HCT116 (cell line): ENCODE measurements at regions of chrX and their contacts with region 1.

Region 1: DNA sequence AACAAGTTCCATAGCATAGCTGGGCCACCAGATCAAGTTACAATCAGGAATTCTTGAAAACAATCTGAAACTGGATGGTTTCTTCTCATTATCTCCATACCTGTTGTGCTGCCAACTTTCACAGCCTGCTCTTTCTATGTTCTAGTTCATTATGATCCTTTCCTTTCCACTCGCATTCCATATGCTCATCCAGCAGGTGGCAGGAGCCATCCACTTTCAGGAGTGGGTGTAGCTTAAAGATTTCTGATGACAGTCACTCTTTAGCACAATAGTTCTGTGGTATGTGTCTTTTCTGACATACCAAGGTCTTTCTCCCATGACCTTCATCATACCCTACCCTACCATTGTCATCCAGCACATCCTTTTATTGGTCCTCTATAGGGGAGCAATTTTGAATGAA is 46.4 kb downstream of the PAGE2 start:
- DNase-seq: peak; percentile 2
- ATAC-seq: peak; percentile 57
- H3K4me3 ChIP-seq: no peak overlapping the region
- H3K27ac ChIP-seq: no peak overlapping the region
- H3K4me1 ChIP-seq: no peaks in the 10 kb centered on the region
- H3K27me3 ChIP-seq: no peaks in the 10 kb centered on the region
- CTCF ChIP-seq: peak; percentile 38 to 45 (median 40); a peak in 5 of 6 replicates
- POLR2A ChIP-seq: no peak
- RAD21 ChIP-seq: peak; percentile 65

Region 2: DNA sequence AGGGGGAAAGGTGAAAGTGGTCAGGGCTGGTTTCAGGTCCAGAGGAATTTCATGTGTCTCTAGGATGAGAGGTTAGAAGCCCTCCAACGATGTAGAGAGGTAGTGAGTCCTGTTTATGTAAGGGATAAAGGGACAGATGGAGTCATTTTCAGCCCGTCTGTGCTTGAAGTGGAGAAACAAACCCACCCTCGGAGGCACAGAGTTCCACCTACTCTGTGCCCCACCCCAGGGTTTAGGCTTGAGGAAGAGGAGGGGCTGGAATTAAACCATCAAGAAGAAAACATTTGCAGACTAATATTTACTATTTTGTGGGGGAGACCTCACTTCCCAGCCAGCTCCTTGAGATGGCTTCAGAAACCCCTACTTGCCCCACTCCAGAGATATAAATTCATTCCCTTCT is 606.0 kb before region 1 on chrX:
- CTCF ChIA-PET with region 1: no interaction called
- POLR2A ChIA-PET with region 1: no interaction called
- RAD21 ChIA-PET with region 1: no interaction called
- intact Hi-C with region 1: no loop called
- DNase-seq: no peak
- ATAC-seq: no peak
- H3K4me3 ChIP-seq: peak overlapping the region; percentile 62 to 87
- H3K27ac ChIP-seq: peak overlapping the region; percentile 79
- H3K4me1 ChIP-seq: peaks cover 5 to 25% of the 10 kb centered on the region in 2 experiments
- H3K27me3 ChIP-seq: no peaks in the 10 kb centered on the region
- CTCF ChIP-seq: no peak
- POLR2A ChIP-seq: no peak
- RAD21 ChIP-seq: no peak

Region 3: GRCh38 chrX:55088795-55089489 is 46.2 kb before region 1 on chrX and contains the start of gene PAGE2:
- CTCF ChIA-PET with region 1: no interaction called
- POLR2A ChIA-PET with region 1: no interaction called
- RAD21 ChIA-PET with region 1: no interaction called
- intact Hi-C with region 1: no loop called
- DNase-seq: no peak
- ATAC-seq: no peak
- H3K4me3 ChIP-seq: no peak within 1 kb of the TSS
- H3K27ac ChIP-seq: no peak within 1 kb of the TSS
- H3K4me1 ChIP-seq: no peaks in the 10 kb centered on the region
- H3K27me3 ChIP-seq: no peaks in the 10 kb centered on the region
- CTCF ChIP-seq: no peak
- POLR2A ChIP-seq: no peak
- RAD21 ChIP-seq: no peak
- total RNA-seq, gene PAGE2: not detected

Region 4: DNA sequence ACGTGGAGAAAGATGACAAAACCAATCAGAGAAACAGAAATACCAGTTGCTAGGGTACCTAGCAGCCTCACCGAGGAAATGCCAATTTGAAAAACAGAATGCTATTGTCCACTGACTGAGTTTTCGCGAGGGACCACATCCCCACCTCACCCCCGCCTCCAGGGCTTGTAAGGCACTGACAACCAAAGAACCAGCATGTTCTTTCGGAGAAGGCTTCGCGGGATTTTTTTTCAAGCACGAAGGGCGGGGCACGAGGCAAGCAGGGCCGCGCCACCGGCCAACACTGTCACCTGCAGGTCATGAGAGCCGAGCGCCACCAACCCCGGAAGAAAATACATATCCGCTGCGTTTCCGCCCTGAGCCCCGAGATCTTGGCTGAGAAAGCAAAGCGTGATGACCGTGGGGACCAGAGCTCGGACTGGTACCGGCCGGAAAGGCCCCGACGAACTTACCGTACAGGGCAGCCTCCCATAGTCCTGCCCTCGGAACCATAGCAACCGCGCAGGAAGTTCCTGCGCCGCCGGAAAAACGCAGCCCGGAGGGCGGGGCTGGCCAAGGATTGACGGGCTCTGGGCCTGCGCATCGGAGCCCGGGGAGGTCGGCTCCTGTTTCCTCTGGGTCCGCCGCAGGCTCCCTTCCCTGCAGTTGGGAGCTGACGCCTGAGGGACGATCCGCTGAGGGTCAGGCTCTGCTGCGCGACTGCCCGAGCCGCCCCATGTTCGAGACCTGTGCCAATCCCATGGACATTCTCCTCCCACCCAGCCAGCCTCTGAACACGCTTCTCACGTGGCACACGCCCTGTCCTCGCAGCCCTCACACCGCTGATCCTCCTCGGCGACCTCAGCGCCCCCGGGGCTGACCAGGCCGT is 25.7 kb after region 1 on chrX:
- CTCF ChIA-PET with region 1: no interaction called
- POLR2A ChIA-PET with region 1: no interaction called
- RAD21 ChIA-PET with region 1: no interaction called
- intact Hi-C with region 1: loop called (anchors 1 kb)
- DNase-seq: peak; percentile 68
- ATAC-seq: peak; percentile 95
- H3K4me3 ChIP-seq: peak overlapping the region; percentile 62 to 74
- H3K27ac ChIP-seq: peak overlapping the region; percentile 89
- H3K4me1 ChIP-seq: peaks cover 0 to 7% of the 10 kb centered on the region in 2 experiments; a peak in 2 of 4 replicates
- H3K27me3 ChIP-seq: no peaks in the 10 kb centered on the region
- CTCF ChIP-seq: peak in 2 of 3 experiments; percentile 36 to 65; a peak in 3 of 6 replicates
- POLR2A ChIP-seq: peak; percentile 46
- RAD21 ChIP-seq: peak; percentile 53

Region 5: GRCh38 chrX:55210931-55211681 is 75.9 kb after region 1 on chrX:
- CTCF ChIA-PET with region 1: no interaction called
- POLR2A ChIA-PET with region 1: no interaction called
- RAD21 ChIA-PET with region 1: no interaction called
- intact Hi-C with region 1: loop called (anchors 1 kb)
- DNase-seq: no peak
- ATAC-seq: no peak
- H3K4me3 ChIP-seq: no peak overlapping the region
- H3K27ac ChIP-seq: no peak overlapping the region
- H3K4me1 ChIP-seq: no peaks in the 10 kb centered on the region
- H3K27me3 ChIP-seq: no peaks in the 10 kb centered on the region
- CTCF ChIP-seq: peak in 1 of 3 experiments; percentile 36; a peak in 2 of 6 replicates
- POLR2A ChIP-seq: no peak
- RAD21 ChIP-seq: peak; percentile 48

Region 6: GRCh38 chrX:55312655-55313054 is 177.5 kb after region 1 on chrX:
- CTCF ChIA-PET with region 1: no interaction called
- POLR2A ChIA-PET with region 1: no interaction called
- RAD21 ChIA-PET with region 1: no interaction called
- intact Hi-C with region 1: loop called (anchors 10 kb)
- DNase-seq: no peak
- ATAC-seq: no peak
- H3K4me3 ChIP-seq: no peak overlapping the region
- H3K27ac ChIP-seq: no peak overlapping the region
- H3K4me1 ChIP-seq: no peaks in the 10 kb centered on the region
- H3K27me3 ChIP-seq: no peaks in the 10 kb centered on the region
- CTCF ChIP-seq: no peak
- POLR2A ChIP-seq: no peak
- RAD21 ChIP-seq: no peak

Region 7: DNA sequence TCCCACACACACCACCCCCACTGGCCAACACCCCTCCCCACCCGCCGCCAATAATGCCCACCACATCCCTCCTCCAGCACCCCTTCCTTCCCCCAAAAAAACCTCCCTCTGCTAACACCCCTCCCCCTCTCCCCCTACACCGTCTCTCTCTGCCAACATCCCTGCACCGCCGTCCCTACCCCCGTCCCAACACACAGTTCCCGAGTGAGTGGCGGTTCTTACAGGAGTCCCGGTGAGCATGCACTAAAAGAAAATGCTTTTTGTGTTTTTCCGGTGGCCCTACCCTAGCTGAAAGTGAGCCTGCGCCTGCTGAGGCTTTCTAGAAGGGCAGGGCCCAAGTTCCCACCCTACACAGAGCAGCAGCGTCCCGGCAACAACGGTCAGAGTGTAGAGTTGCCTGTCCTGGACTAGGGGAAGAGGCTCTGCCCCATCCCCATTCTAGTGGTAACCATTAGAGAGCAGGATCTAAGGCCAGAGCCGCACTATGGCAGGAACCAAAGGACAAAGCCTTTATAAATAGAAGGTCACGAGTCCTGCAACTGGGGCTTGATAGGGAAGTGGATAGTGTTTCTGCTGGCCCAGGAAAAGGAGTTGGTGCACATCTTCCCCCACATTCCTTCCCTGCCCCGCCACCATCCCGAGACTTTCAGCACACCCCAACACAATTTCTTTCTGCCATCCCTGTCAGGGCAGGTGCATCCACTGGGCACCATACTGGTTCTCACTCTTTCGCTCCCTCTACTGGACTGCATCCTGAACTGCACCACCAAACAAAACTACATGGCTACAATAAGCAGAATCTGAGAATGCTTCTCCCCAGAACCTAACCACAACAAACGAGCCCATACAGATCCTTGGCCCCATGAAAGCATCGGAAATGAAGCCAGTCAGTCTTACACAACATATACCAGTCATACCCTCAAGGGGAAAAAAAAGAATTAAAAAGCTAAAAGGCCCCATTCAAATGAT is 207.6 kb after region 1 on chrX:
- CTCF ChIA-PET with region 1: no interaction called
- POLR2A ChIA-PET with region 1: no interaction called
- RAD21 ChIA-PET with region 1: no interaction called
- intact Hi-C with region 1: loop called (anchors 1 kb)
- DNase-seq: no peak
- ATAC-seq: peak; percentile 65; the same call in 1 of the 2 replicates
- H3K4me3 ChIP-seq: no peak overlapping the region
- H3K27ac ChIP-seq: no peak overlapping the region
- H3K4me1 ChIP-seq: no peaks in the 10 kb centered on the region
- H3K27me3 ChIP-seq: no peaks in the 10 kb centered on the region
- CTCF ChIP-seq: peak in 2 of 3 experiments; percentile 54 to 56; a peak in 4 of 6 replicates
- POLR2A ChIP-seq: no peak
- RAD21 ChIP-seq: peak; percentile 32; the same call in 1 of the 2 replicates